CD8-positive, alpha-beta memory T cell (primary cell): ENCODE measurements at regions of chr22 and their contacts with region 1.

Region 1: DNA sequence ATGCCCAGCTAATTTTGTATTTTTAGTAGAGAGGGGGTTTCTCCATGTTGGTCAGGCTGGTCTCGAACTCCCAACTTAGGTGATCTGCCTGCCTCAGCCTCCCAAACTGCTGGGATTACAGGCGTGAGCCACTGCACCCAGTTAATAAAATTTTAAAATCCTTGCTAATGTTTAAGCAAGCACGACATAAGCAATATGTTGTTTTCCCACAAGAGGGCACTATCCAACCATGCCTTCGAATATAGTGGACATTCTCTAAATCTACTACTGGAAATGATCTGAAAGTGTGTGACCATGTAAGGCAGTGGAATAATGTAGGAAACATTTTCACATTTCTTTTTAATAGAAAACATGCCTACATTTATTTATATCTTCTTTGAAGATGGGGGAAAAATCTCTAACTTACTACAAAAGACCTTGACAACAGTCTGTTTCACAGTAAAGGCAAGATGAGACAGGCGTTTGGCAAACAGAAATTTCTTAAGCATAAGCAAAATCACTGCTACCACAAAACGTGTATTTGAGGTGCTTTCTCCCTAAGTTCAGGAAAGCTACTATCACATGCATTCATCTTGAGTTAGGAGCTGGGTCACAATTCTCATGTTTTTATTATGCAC is 38.2 kb downstream of the PITPNB start:
- DNase-seq: peak in 2 of 5 donors; percentile 13 to 24
- H3K4me3 ChIP-seq: no peak overlapping the region
- H3K4me3 Mint-ChIP-seq: no peak overlapping the region
- H3K27ac ChIP-seq: no peak overlapping the region
- H3K27ac Mint-ChIP-seq: no peak overlapping the region
- H3K4me1 ChIP-seq: peaks cover 16% of the 10 kb centered on the region
- H3K4me1 Mint-ChIP-seq: peaks cover 17 to 39% (median 30%) of the 10 kb centered on the region in 3 donors
- H3K27me3 ChIP-seq: no peaks in the 10 kb centered on the region
- H3K27me3 Mint-ChIP-seq: no peaks in the 10 kb centered on the region

Region 2: DNA sequence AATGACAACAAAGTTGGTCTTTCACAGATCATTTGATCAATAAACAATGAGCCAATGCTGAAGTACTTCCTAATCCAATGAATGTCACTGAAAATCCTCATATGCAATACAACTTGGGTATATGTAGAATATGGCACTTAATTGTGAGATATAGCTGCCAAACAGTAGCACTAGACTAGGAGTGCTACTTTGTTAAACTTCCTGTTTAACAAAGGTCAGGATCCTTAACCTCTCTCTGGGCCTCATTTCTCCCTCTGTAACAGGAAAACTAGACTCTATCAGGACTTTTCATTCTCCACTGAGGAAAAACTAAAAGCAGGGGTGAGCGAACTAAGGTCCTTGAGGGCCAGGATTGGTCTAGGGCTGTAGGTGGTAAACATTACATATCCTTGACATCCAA is 17.9 kb before region 1 on chr22:
- CTCF ChIA-PET with region 1: interaction called, 10 read pairs
- POLR2A ChIA-PET with region 1: no interaction called
- DNase-seq: no peak
- H3K4me3 ChIP-seq: no peak overlapping the region
- H3K4me3 Mint-ChIP-seq: no peak overlapping the region
- H3K27ac ChIP-seq: no peak overlapping the region
- H3K27ac Mint-ChIP-seq: peak overlapping the region in 1 of 8 donors; percentile 64
- H3K4me1 ChIP-seq: peaks cover under 1% of the 10 kb centered on the region
- H3K4me1 Mint-ChIP-seq: peaks cover 7 to 39% (median 24%) of the 10 kb centered on the region in 3 donors
- H3K27me3 ChIP-seq: no peaks in the 10 kb centered on the region
- H3K27me3 Mint-ChIP-seq: no peaks in the 10 kb centered on the region

Region 3: GRCh38 chr22:27994481-27995331 is 113.8 kb after region 1 on chr22:
- CTCF ChIA-PET with region 1: no interaction called
- POLR2A ChIA-PET with region 1: no interaction called
- DNase-seq: no peak
- H3K4me3 ChIP-seq: no peak overlapping the region
- H3K4me3 Mint-ChIP-seq: no peak overlapping the region
- H3K27ac ChIP-seq: no peak overlapping the region
- H3K27ac Mint-ChIP-seq: no peak overlapping the region
- H3K4me1 ChIP-seq: no peaks in the 10 kb centered on the region
- H3K4me1 Mint-ChIP-seq: no peaks in the 10 kb centered on the region
- H3K27me3 ChIP-seq: no peaks in the 10 kb centered on the region
- H3K27me3 Mint-ChIP-seq: peaks cover 0 to 4% of the 10 kb centered on the region in 2 donors